ENCODE measurements at regions of chr6 and their contacts with region 1.

Region 1: GRCh38 chr6:127420556-127420955 is 38.6 kb downstream of the KIAA0408 start:
- DNase-seq: peak in 1 of 2 experiments; percentile 86
- H3K4me3 ChIP-seq: no peak overlapping the region
- H3K27ac ChIP-seq: no peak overlapping the region
- H3K4me1 ChIP-seq: peaks cover 0 to 4% (median 0%) of the 10 kb centered on the region in 4 experiments; a peak in 2 of 7 replicates
- H3K27me3 ChIP-seq: no peaks in the 10 kb centered on the region
- CTCF ChIP-seq: peak; percentile 23 to 76 (median 70)
- EP300 ChIP-seq: no peak
- POLR2A ChIP-seq: no peak
- RAD21 ChIP-seq: peak; percentile 80 to 81

Region 2: GRCh38 chr6:127403636-127404035 is 16.9 kb before region 1 on chr6:
- CTCF ChIA-PET with region 1: interaction called, 16 read pairs
- POLR2A ChIA-PET with region 1: no interaction called
- DNase-seq: no peak
- H3K4me3 ChIP-seq: no peak overlapping the region
- H3K27ac ChIP-seq: no peak overlapping the region
- H3K4me1 ChIP-seq: no peaks in the 10 kb centered on the region
- H3K27me3 ChIP-seq: no peaks in the 10 kb centered on the region
- CTCF ChIP-seq: no peak
- EP300 ChIP-seq: no peak
- POLR2A ChIP-seq: no peak
- RAD21 ChIP-seq: no peak

Measured in H1 (cell line).